ENCODE measurements at regions of chr3 and their contacts with region 1.

Region 1: DNA sequence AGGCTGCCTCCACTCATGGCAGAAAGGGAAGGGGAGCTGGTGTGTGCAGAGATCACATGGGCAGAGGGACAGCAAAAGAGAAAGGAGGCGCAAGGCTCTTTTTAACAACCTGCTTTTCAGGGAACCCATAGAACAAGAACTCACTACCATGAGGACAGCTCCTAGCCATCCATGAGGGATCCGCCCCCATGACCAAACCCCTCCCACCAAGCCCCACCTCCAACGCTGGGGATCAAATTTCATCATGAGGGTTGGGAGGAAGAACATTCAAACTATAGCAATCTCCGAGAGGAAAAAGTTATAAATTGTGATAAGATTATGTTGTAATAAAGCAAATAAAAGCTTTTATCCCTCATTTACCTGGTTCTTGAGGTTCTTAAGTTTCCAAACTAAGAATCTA is 84.7 kb upstream of the LMCD1 start:
- DNase-seq: no peak

Region 2: GRCh38 chr3:8111069-8111798 is 305.7 kb before region 1 on chr3:
- intact Hi-C with region 1: loop called (anchors 5 kb)
- DNase-seq: peak in 8 of 10 donors; percentile 15 to 93 (median 74)

Region 3: GRCh38 chr3:8324740-8325139 is 92.2 kb before region 1 on chr3:
- intact Hi-C with region 1: loop called (anchors 1 kb)
- DNase-seq: peak in 8 of 10 donors; percentile 37 to 94 (median 54)

Region 4: DNA sequence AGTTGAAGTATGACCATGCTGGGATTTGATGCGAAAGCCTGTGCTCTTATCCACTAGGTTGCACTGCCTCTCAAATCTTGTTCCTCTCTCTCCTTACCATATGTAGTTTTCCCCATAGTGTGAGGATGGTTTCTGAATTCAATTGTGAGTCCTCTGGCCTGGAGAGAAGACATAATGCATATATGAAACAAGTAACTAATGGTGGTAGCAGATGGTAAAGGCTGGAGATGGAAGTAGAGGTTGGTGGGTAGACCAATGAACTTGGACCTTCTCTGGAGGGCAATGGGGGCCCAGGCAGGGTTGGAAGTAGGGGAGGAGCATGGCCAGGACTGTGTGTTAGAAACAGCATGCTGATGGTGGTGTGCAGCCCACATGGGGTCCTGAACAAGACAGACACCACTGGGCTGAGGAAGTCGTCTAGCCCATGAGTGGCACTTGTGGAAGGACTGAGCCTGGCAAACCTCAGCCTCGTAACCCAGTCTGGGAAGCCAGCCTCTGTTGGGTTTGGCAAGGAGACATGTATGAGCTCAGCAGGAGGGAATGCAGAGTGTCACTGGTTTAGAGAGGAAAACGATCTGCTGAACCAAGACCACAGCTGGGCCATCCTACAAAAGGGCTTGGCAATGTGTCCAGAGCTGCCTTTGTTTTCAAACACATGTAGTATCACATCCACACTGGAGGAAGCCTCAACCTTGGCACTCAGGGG is 66.1 kb after region 1 on chr3:
- intact Hi-C with region 1: no loop called
- DNase-seq: peak in 9 of 10 donors; percentile 27 to 91 (median 57)